Endothelial cell of umbilical vein (primary cell): ENCODE measurements at regions of chr6 and their contacts with region 1.

Region 1: GRCh38 chr6:2229039-2229438 is 16.4 kb downstream of the GMDS start:
- DNase-seq: no peak
- H3K4me3 ChIP-seq: no peak overlapping the region
- H3K27ac ChIP-seq: no peak overlapping the region
- H3K4me1 ChIP-seq: peaks cover 14% of the 10 kb centered on the region
- H3K27me3 ChIP-seq: no peaks in the 10 kb centered on the region
- CTCF ChIP-seq: no peak
- POLR2A ChIP-seq: no peak

Region 2: DNA sequence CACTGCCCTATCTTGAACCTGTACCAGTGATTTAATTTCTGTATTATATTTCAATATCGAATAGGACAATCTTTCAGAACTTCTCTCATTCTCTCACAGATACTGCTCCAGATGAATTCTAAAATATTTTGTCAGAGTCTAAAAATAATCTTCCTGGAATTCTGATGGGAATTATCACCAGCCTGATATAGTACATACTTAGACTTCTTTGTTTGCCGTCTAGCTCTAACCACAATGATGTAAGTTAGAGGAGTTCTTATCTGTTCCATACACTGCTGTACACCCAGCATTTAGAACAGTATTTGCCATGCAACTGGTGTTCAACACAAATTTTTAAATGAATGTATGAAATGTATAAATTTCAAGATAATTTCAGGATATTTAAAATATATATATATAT is 1570.8 kb before region 1 on chr6:
- CTCF ChIA-PET with region 1: no interaction called
- POLR2A ChIA-PET with region 1: no interaction called
- dilution Hi-C with region 1: no loop called
- intact Hi-C with region 1: no loop called
- DNase-seq: no peak
- H3K4me3 ChIP-seq: no peak overlapping the region
- H3K27ac ChIP-seq: no peak overlapping the region
- H3K4me1 ChIP-seq: no peaks in the 10 kb centered on the region
- H3K27me3 ChIP-seq: no peaks in the 10 kb centered on the region
- CTCF ChIP-seq: no peak
- POLR2A ChIP-seq: no peak

Region 3: DNA sequence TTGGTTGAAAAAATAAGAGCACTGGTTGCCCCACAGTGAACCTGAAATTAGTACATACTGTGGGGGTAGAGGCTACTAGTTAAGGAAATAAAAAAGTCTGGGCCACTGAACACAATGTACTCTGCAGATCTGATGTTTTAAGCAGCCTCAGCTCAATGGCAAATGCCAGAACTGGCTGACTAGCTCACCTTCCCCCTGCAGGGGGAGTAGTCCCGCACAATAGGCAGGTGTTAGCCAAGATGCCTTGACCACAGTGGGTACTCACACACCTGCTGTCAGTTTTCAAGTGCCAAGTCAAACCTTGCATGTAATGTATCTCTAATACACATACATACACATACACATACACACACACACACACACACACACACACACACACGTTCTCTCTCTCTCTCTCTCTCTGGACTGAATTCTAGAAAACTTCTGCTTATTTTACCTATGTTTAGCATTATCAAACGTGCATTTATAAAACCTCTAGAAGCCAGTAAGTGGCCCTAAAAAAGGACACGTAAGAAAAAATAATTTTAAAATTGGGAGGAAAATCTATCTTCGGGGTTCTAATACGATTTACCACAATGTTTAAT is 19.7 kb before region 1 on chr6:
- CTCF ChIA-PET with region 1: interaction called, 31 read pairs
- POLR2A ChIA-PET with region 1: no interaction called
- dilution Hi-C with region 1: no loop called
- intact Hi-C with region 1: no loop called
- DNase-seq: peak; percentile 64
- H3K4me3 ChIP-seq: no peak overlapping the region
- H3K27ac ChIP-seq: no peak overlapping the region
- H3K4me1 ChIP-seq: no peaks in the 10 kb centered on the region
- H3K27me3 ChIP-seq: no peaks in the 10 kb centered on the region
- CTCF ChIP-seq: peak; percentile 42 to 75
- POLR2A ChIP-seq: no peak